ENCODE measurements at regions of chr2 and their contacts with region 1.

Region 1: GRCh38 chr2:219119422-219120043 is 41.1 kb downstream of the NHEJ1 start:
- DNase-seq: peak; percentile 50 to 75 (median 54)
- ATAC-seq: peak; percentile 91
- H3K4me3 ChIP-seq: no peak overlapping the region
- H3K27ac ChIP-seq: no peak overlapping the region
- H3K4me1 ChIP-seq: peaks cover 4 to 8% of the 10 kb centered on the region in 2 experiments
- H3K27me3 ChIP-seq: no peaks in the 10 kb centered on the region
- CTCF ChIP-seq: peak; percentile 61 to 72 (median 66)
- EP300 ChIP-seq: no peak
- POLR2A ChIP-seq: no peak
- RAD21 ChIP-seq: peak; percentile 65 to 74

Region 2: GRCh38 chr2:219029829-219030165 is 89.7 kb before region 1 on chr2:
- CTCF ChIA-PET with region 1: interaction called, 3 read pairs
- POLR2A ChIA-PET with region 1: no interaction called
- in situ Hi-C with region 1: no loop called
- intact Hi-C with region 1: loop called (anchors 1 kb)
- DNase-seq: peak; percentile 74 to 84 (median 80)
- ATAC-seq: peak; percentile 97
- H3K4me3 ChIP-seq: no peak overlapping the region
- H3K27ac ChIP-seq: no peak overlapping the region
- H3K4me1 ChIP-seq: peaks cover 0 to 4% of the 10 kb centered on the region in 2 experiments; a peak in 1 of 5 replicates
- H3K27me3 ChIP-seq: peaks cover 5 to 58% of the 10 kb centered on the region in 2 experiments; a peak in 3 of 5 replicates
- CTCF ChIP-seq: peak; percentile 85 to 87 (median 86)
- EP300 ChIP-seq: no peak
- POLR2A ChIP-seq: no peak
- RAD21 ChIP-seq: peak; percentile 63 to 83

Region 3: DNA sequence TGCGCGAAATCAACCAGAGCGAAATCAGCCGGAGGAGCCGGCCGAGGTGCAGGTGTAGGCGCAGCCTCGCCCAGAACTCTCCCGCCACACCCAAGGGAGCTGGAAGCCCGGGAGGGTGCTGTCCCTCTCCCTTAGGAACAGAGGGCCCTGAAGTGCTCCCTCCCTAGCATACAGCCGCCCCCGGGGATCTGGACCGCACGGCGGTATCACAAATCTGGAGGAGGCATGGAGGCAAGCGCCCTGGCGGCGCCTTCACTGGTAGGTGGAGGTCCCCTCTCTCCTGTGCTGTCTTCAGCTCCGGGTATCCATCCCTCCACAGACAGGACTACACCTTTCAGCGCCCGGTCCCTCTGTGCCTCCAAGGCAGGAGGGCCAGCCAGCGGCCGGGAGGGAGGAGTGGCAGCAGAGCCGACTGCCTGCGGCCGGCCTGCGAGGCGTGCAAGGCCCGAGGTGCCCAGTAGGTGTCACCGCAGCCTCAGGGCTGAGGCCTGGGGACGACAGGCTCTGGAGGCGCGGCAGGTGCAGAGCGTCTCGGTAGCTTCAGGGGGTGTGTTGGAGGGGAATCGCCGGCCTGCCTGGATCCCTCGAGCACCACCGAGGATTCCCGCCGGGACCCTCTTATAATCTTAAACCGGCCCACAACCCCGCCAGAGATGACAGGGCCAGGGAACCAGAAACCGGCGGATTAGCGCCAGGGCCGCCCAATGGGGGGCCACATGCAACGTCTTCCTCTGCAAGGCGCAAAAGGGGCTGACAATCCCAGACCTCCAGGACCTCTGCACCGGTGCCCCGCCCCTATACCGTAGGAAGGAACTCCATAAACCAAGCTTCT is 61.6 kb before region 1 on chr2:
- CTCF ChIA-PET with region 1: interaction called, 5 read pairs
- POLR2A ChIA-PET with region 1: no interaction called
- in situ Hi-C with region 1: no loop called
- intact Hi-C with region 1: loop called (anchors 1 kb)
- DNase-seq: peak; percentile 69 to 78 (median 74)
- ATAC-seq: peak; percentile 98
- H3K4me3 ChIP-seq: no peak overlapping the region
- H3K27ac ChIP-seq: no peak overlapping the region
- H3K4me1 ChIP-seq: peaks cover 0 to 25% of the 10 kb centered on the region in 2 experiments; a peak in 2 of 5 replicates
- H3K27me3 ChIP-seq: peaks cover 14 to 57% of the 10 kb centered on the region in 2 experiments; a peak in 4 of 5 replicates
- CTCF ChIP-seq: peak; percentile 75 to 89 (median 78)
- EP300 ChIP-seq: no peak
- POLR2A ChIP-seq: no peak
- RAD21 ChIP-seq: peak; percentile 81 to 86

Region 4: GRCh38 chr2:219073413-219074129 is 46.0 kb before region 1 on chr2:
- CTCF ChIA-PET with region 1: interaction called, 3 read pairs
- POLR2A ChIA-PET with region 1: interaction called, 4 read pairs
- in situ Hi-C with region 1: loop called (anchors 5 kb)
- intact Hi-C with region 1: loop called (anchors 1 kb)
- DNase-seq: peak; percentile 27 to 74 (median 47)
- ATAC-seq: peak; percentile 86
- H3K4me3 ChIP-seq: no peak overlapping the region
- H3K27ac ChIP-seq: no peak overlapping the region
- H3K4me1 ChIP-seq: no peaks in the 10 kb centered on the region
- H3K27me3 ChIP-seq: no peaks in the 10 kb centered on the region
- CTCF ChIP-seq: peak; percentile 68 to 75 (median 70); a peak in 5 of 6 replicates
- EP300 ChIP-seq: no peak
- POLR2A ChIP-seq: no peak
- RAD21 ChIP-seq: peak; percentile 47 to 68

Region 5: GRCh38 chr2:219104107-219105035 is 15.2 kb before region 1 on chr2:
- CTCF ChIA-PET with region 1: no interaction called
- POLR2A ChIA-PET with region 1: interaction called, 11 read pairs
- in situ Hi-C with region 1: no loop called
- intact Hi-C with region 1: no loop called
- DNase-seq: peak; percentile 31 to 59 (median 54)
- ATAC-seq: peak; percentile 89
- H3K4me3 ChIP-seq: no peak overlapping the region
- H3K27ac ChIP-seq: no peak overlapping the region
- H3K4me1 ChIP-seq: peaks cover 0 to 4% of the 10 kb centered on the region in 2 experiments; a peak in 1 of 5 replicates
- H3K27me3 ChIP-seq: no peaks in the 10 kb centered on the region
- CTCF ChIP-seq: peak; percentile 72 to 82 (median 75)
- EP300 ChIP-seq: no peak
- POLR2A ChIP-seq: no peak
- RAD21 ChIP-seq: peak in 1 of 2 experiments; percentile 61; a peak in 2 of 4 replicates

Region 6: GRCh38 chr2:219161097-219161496 is 41.6 kb after region 1 on chr2:
- CTCF ChIA-PET with region 1: no interaction called
- POLR2A ChIA-PET with region 1: no interaction called
- in situ Hi-C with region 1: no loop called
- intact Hi-C with region 1: no loop called
- DNase-seq: no peak
- ATAC-seq: no peak
- H3K4me3 ChIP-seq: peak overlapping the region; percentile 55
- H3K27ac ChIP-seq: no peak overlapping the region
- H3K4me1 ChIP-seq: peaks cover 8 to 16% of the 10 kb centered on the region in 2 experiments; a peak in 4 of 5 replicates
- H3K27me3 ChIP-seq: no peaks in the 10 kb centered on the region
- CTCF ChIP-seq: no peak
- EP300 ChIP-seq: no peak
- POLR2A ChIP-seq: no peak
- RAD21 ChIP-seq: no peak

Region 7: DNA sequence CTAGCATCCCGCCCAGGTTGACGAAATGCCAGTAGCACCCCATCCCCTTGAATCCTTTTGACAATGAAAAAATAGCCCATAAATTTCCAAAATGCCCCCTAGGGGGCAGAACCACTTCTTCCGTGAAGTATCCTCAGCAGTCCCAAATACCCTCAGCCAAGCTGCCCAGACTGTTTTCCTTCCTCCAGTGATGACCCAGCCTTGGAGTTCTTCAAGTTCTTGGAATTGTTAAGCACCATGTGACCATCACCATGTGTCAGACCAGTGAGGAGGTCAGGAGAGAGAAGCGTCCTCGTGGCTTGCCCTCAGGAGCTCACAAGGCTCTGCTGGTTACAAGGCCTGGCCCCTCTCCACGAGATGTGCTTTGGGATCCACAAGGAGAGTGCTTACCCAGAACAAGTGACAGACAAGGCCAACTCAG is 51.7 kb after region 1 on chr2:
- CTCF ChIA-PET with region 1: no interaction called
- POLR2A ChIA-PET with region 1: no interaction called
- in situ Hi-C with region 1: no loop called
- intact Hi-C with region 1: no loop called
- DNase-seq: peak; percentile 41 to 59 (median 44)
- ATAC-seq: peak; percentile 82
- H3K4me3 ChIP-seq: no peak overlapping the region
- H3K27ac ChIP-seq: no peak overlapping the region; the same call in 2 of the 3 replicates
- H3K4me1 ChIP-seq: peaks cover 6% of the 10 kb centered on the region in 2 experiments; a peak in 3 of 5 replicates
- H3K27me3 ChIP-seq: no peaks in the 10 kb centered on the region
- CTCF ChIP-seq: peak; percentile 50 to 75 (median 72)
- EP300 ChIP-seq: no peak
- POLR2A ChIP-seq: no peak
- RAD21 ChIP-seq: peak; percentile 44 to 56

Region 8: GRCh38 chr2:219344751-219345430 is 225.4 kb after region 1 on chr2:
- CTCF ChIA-PET with region 1: no interaction called
- POLR2A ChIA-PET with region 1: no interaction called
- in situ Hi-C with region 1: no loop called
- intact Hi-C with region 1: no loop called
- DNase-seq: no peak
- ATAC-seq: no peak
- H3K4me3 ChIP-seq: no peak overlapping the region
- H3K27ac ChIP-seq: no peak overlapping the region
- H3K4me1 ChIP-seq: no peaks in the 10 kb centered on the region
- H3K27me3 ChIP-seq: peaks cover 0 to 11% of the 10 kb centered on the region in 2 experiments; a peak in 2 of 5 replicates
- CTCF ChIP-seq: no peak
- EP300 ChIP-seq: no peak
- POLR2A ChIP-seq: no peak
- RAD21 ChIP-seq: no peak

Region 9: GRCh38 chr2:219543601-219544358 is 424.2 kb after region 1 on chr2 and contains the starts of genes CHPF and TMEM198:
- CTCF ChIA-PET with region 1: no interaction called
- POLR2A ChIA-PET with region 1: no interaction called
- in situ Hi-C with region 1: no loop called
- intact Hi-C with region 1: no loop called
- DNase-seq: peak; percentile 92 to 98 (median 94)
- ATAC-seq: peak; percentile 89
- H3K4me3 ChIP-seq: peak within 1 kb of the TSS; percentile 83
- H3K27ac ChIP-seq: peak within 1 kb of the TSS; percentile 74
- H3K4me1 ChIP-seq: peaks cover 0 to 53% of the 10 kb centered on the region in 2 experiments; a peak in 3 of 5 replicates
- H3K27me3 ChIP-seq: no peaks in the 10 kb centered on the region
- CTCF ChIP-seq: no peak
- EP300 ChIP-seq: no peak; the same call in 1 of the 2 replicates
- POLR2A ChIP-seq: 0 out of 2 replicates have a peak, but pooled peaks have one; percentile 52
- RAD21 ChIP-seq: no peak
- polyA plus RNA-seq, gene CHPF: 0.15 to 0.35 TPM
- polyA plus RNA-seq, gene TMEM198: 0.03 TPM

Measured in K562 (cell line).